ENCODE measurements at regions of chrX and their contacts with region 1.

Region 1: DNA sequence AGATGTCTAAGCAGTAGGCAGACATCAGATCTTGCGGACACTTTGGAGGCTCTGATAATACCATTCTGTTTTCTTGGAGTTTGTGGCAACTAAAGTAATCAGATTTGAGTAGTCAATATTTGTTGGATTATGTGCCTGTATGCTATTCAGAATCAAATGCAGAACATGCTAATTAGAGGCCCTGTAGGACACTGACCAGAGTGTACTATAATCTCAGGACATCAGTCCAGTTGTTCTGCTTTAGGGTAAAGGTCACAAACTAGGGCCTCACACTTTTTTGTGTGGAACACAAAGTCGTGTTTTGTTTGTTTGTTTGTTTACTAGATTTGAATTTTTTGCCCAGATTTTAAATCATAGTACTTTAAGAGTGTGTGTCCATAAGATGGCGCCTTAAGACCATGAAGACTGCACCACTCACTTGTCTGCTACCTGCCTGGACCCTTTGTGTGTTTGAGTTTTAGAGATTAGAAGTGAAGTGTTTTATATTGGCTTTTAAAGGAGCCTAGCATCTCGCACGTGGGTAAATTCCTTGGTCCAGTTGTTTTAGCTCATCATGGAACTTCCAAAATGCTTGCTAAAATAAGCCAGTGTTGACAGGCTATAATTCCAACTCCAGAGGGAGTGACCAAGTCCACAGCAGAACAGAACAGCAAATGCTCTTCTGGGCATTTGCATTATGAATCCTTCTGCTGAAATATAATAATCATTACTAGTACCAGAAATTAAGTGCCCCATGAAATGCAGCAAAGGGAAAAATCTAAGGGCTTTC is 34.7 kb downstream of the IL13RA1 start:
- DNase-seq: no peak
- H3K4me3 ChIP-seq: no peak overlapping the region
- H3K27ac ChIP-seq: no peak overlapping the region
- H3K4me1 ChIP-seq: peaks cover 0 to 4% (median 0%) of the 10 kb centered on the region in 4 experiments; a peak in 1 of 7 replicates
- H3K27me3 ChIP-seq: no peaks in the 10 kb centered on the region
- CTCF ChIP-seq: peak in 1 of 3 experiments; percentile 41; a peak in 1 of 4 replicates
- EP300 ChIP-seq: no peak
- POLR2A ChIP-seq: no peak
- RAD21 ChIP-seq: peak; percentile 74 to 75

Region 2: GRCh38 chrX:118495958-118496763 is 266.0 kb before region 1 on chrX:
- CTCF ChIA-PET with region 1: no interaction called
- POLR2A ChIA-PET with region 1: no interaction called
- DNase-seq: peak in 1 of 2 experiments; percentile 49
- H3K4me3 ChIP-seq: peak overlapping the region; percentile 61 to 76 (median 66)
- H3K27ac ChIP-seq: no peak overlapping the region
- H3K4me1 ChIP-seq: peaks cover 0 to 12% (median 8%) of the 10 kb centered on the region in 4 experiments; a peak in 4 of 7 replicates
- H3K27me3 ChIP-seq: peaks cover 0 to 15% (median 9%) of the 10 kb centered on the region in 4 experiments; a peak in 6 of 7 replicates
- CTCF ChIP-seq: no peak
- EP300 ChIP-seq: no peak
- POLR2A ChIP-seq: no peak
- RAD21 ChIP-seq: no peak

Region 3: DNA sequence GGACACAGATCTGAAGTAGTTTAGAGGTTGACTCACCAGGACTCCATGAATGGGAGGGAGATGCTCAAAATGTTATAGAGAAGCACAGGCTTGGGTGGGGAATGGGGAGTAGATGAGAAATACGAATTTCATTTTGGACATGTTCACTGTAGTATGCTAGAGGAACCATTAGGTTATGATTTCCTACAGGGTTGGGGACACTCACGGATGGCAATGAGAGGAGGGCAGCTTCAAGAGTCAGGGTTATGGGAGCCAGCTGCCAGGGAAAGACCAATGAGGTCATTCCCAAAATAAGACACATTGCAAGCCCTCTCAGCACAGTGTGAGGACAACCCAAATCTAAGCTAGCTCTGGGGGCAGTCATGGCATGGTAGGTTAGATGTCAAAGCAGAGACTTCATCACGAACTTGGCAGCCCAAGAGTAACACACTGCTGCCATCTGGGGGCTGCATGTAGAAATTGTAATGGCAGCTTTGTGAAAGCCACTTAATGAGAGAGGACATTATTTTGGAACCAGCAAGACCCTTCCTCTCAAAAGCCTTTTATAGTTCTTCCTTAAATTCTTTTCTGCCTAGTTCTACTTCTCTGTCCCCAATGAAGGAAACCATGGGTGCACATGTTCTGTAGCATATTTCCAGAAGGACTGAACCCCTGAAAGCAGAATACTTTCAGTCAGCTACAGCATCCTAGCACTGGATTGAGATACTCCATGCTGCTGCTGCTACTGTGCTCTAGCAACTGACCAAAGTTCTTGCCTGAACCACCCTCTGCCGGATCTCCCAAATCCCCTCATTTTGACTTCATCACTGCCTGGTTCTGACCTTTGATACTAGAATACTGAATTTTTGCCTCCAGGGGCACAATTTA is 45.3 kb after region 1 on chrX:
- CTCF ChIA-PET with region 1: interaction called, 13 read pairs
- POLR2A ChIA-PET with region 1: no interaction called
- DNase-seq: no peak
- H3K4me3 ChIP-seq: no peak overlapping the region
- H3K27ac ChIP-seq: no peak overlapping the region
- H3K4me1 ChIP-seq: no peaks in the 10 kb centered on the region
- H3K27me3 ChIP-seq: no peaks in the 10 kb centered on the region
- CTCF ChIP-seq: peak; percentile 11 to 73 (median 68)
- EP300 ChIP-seq: no peak
- POLR2A ChIP-seq: no peak
- RAD21 ChIP-seq: peak; percentile 90 to 92

Measured in H1 (cell line).